ENCODE measurements at regions of chr5 and their contacts with region 1.

Region 1: DNA sequence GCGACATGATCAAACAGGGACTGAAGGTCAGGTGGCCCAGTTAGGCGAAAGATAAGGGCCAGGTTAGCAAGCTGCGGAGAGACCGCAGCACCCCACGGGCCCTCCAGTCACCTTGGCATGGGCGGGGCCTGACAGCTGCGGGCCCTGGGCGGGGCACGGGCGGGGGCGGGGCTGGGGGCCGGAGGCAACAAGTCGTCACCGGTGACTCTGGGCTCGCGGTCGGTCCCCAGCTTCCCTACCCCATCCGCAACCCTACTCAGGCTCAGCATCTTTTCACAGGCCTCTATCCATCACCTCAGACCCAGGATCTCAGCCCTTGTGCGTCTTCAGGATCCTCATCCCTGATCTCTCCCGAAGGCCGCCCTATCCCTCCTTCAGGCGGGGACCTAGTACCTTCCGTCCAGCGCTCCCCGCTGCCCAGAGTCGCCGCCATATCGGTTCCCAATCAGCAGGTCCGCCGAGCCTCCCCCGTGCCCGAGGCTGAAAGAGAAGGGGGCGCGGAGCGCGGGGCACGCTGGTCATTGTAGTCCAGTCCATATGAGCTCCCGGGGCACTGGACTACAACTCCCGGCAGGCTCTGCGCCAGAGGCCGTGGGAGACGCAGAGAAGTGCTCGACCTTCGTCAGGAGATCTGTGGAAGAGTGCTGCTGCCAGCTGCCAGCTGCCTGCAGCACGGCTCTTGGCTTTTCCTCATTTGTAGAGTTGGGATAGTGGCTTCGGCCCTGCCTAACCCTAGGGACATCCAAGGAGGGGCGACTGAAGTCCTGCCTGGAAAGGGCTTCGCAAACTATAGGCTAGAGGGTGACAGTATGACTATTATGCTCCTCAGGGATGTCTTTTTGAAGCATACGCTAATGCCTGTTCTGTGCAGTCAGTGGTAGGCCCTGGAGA is at the start of gene DNAJC18:
- DNase-seq: peak; percentile 96
- ATAC-seq: peak; percentile 99
- total RNA-seq, gene DNAJC18: 14.8 to 15.2 TPM

Region 2: GRCh38 chr5:139517683-139518564 is 78.7 kb after region 1 on chr5:
- intact Hi-C with region 1: loop called in 1 of 2 experiments (anchors 5 kb)
- DNase-seq: peak; percentile 94
- ATAC-seq: peak; percentile 93 to 96

Region 3: GRCh38 chr5:139531772-139532169 is 92.5 kb after region 1 on chr5:
- intact Hi-C with region 1: no loop called
- DNase-seq: no peak
- ATAC-seq: no peak